Activated T-helper 1 cell treated with anti-CD3 and anti-CD28 coated beads, Interleukin-12 subunit alpha, Interleukin-12 subunit beta, Interleukin-2, Interleukin-4 antibody, amounts not matched to agents 30 ng/mL and 10 ng/mL and 1 ng/mL, durations not matched to agents 14 hours and 24 hours and 36 hours (primary cell): ENCODE measurements at regions of chr15 and their contacts with region 1.

Region 1: DNA sequence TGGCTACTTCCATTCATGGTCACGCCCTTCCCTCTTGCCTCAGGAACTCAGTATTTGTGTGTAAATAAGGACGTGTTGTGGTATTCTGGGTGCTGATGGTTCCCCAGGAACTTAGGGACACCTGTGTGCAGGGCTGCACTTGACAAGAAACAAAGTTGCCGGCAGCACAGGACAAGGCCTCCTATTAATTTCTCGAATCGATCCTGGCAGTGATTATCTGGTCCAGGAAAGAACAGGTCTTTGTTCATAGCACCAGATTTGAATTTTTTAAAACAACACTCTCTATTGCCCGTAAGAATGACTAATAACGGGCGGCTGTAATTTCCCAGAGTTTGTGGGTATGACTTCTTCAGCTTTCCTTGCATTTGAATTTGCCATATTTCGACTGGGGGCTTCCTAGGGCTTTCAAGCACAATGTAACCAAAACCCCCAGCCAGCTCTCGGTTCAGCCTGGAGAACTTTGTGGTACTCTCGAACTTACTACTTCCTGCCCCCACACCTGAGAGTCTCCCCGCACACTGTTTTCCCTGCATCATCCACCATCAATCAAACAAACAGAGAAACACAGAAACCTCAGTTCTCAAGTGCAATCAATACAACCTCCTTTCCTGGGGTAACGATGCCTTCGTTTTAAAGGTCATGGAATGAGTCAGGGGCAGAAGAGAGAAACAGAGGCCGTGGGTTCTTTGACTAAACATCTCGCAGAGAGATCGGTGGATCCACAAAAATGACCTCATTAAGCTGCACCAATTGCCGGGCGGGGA is 241.7 kb upstream of the ICE2 start:
- DNase-seq: peak; percentile 56
- H3K4me3 Mint-ChIP-seq: peak overlapping the region; percentile 59
- H3K27ac Mint-ChIP-seq: peak overlapping the region; percentile 88
- H3K4me1 Mint-ChIP-seq: peaks cover 80% of the 10 kb centered on the region
- H3K27me3 Mint-ChIP-seq: no peaks in the 10 kb centered on the region

Region 2: GRCh38 chr15:60389261-60390077 is 331.2 kb before region 1 on chr15:
- intact Hi-C with region 1: loop called (anchors 2 kb)
- DNase-seq: peak; percentile 60
- H3K4me3 Mint-ChIP-seq: peak overlapping the region; percentile 34
- H3K27ac Mint-ChIP-seq: peak overlapping the region; percentile 81
- H3K4me1 Mint-ChIP-seq: peaks cover 73% of the 10 kb centered on the region
- H3K27me3 Mint-ChIP-seq: no peaks in the 10 kb centered on the region

Region 3: DNA sequence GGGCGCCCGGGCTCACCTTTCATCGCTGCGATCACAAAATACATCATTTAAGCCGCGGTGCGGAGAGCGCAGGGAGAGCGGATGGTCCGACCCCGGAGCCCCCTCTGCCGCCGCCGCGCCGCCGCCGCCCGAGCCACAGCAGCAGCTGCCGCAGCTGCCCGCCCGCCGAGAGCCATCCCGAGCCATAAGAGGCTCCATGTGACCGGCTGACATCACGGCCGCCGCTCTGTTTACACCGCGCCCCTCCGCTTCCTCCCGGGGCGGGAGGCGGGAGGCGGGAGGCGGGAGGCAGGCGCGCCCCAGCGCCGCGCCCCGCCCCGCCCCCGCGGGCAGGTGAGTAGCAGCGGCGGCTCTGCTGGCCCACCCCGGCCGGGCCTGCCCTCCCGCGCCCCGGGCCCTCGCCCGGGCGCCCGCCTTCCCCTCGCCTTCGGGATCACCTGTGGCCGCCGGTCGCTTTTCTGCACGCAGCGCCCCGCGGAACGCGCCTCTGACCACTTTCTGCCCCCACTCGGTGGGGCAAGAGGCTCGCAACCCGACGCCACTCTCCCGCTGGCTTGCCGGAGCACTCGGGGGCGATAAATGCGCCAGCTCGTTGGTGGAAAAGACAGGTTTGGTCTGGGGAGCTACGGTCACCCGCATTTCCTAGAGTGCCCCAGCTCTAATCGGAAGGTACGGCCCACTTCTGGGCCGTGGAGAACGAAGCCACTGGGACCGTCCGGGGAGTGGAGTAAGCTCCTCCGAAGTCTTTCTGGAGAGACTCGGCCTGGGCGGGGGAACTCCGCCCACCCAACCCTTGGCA is 128.1 kb before region 1 on chr15:
- intact Hi-C with region 1: loop called (anchors 1 kb)
- DNase-seq: peak; percentile 84
- H3K4me3 Mint-ChIP-seq: peak overlapping the region; percentile 83
- H3K27ac Mint-ChIP-seq: peak overlapping the region; percentile 68
- H3K4me1 Mint-ChIP-seq: peaks cover 69% of the 10 kb centered on the region
- H3K27me3 Mint-ChIP-seq: peaks cover 2% of the 10 kb centered on the region

Region 4: DNA sequence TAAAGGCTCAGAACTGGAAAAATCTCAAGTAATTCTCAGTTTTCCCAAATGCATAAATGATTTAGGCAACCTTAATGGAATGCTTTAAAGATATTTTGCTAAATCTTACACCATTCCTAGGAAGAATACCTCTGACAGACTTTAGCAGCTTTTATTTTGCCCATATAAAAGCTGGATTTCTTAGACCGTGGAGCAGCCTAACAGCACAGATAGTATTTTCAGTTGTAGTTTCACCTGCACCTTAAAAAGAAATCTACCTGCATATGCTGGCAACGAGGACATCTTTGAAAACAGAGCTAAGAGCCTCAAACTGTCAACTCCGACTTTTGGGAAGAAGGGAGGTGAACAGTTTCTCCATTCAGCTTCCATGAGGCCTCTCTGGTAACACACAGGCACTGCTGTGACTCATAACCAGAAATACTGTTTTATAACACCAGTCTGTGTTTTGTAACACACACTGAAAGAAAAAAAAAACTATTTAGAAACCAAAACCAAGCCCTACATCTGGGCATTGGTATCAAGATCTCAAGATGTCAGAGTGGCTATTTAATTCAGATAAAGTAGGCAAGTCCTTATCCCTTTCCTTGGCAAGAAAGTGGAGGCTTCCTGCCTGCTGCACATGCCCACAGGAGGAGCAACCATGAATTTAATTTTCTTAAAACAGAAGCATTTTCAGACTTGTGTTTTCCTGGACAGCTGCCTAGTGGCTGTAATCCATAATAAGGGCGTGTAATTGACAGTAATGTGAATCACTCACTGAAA is 60.2 kb before region 1 on chr15:
- intact Hi-C with region 1: loop called (anchors 1 kb)
- DNase-seq: no peak
- H3K4me3 Mint-ChIP-seq: no peak overlapping the region
- H3K27ac Mint-ChIP-seq: no peak overlapping the region
- H3K4me1 Mint-ChIP-seq: peaks cover 55% of the 10 kb centered on the region
- H3K27me3 Mint-ChIP-seq: peaks cover 3% of the 10 kb centered on the region

Region 5: GRCh38 chr15:60704129-60704528 is 16.5 kb before region 1 on chr15:
- intact Hi-C with region 1: loop called (anchors 2 kb)
- DNase-seq: no peak
- H3K4me3 Mint-ChIP-seq: no peak overlapping the region
- H3K27ac Mint-ChIP-seq: peak overlapping the region; percentile 1
- H3K4me1 Mint-ChIP-seq: peaks cover 47% of the 10 kb centered on the region
- H3K27me3 Mint-ChIP-seq: no peaks in the 10 kb centered on the region

Region 6: GRCh38 chr15:60798821-60799220 is 78.1 kb after region 1 on chr15:
- intact Hi-C with region 1: loop called (anchors 1 kb)
- DNase-seq: no peak
- H3K4me3 Mint-ChIP-seq: no peak overlapping the region
- H3K27ac Mint-ChIP-seq: peak overlapping the region; percentile 82
- H3K4me1 Mint-ChIP-seq: peaks cover 76% of the 10 kb centered on the region
- H3K27me3 Mint-ChIP-seq: no peaks in the 10 kb centered on the region

Region 7: DNA sequence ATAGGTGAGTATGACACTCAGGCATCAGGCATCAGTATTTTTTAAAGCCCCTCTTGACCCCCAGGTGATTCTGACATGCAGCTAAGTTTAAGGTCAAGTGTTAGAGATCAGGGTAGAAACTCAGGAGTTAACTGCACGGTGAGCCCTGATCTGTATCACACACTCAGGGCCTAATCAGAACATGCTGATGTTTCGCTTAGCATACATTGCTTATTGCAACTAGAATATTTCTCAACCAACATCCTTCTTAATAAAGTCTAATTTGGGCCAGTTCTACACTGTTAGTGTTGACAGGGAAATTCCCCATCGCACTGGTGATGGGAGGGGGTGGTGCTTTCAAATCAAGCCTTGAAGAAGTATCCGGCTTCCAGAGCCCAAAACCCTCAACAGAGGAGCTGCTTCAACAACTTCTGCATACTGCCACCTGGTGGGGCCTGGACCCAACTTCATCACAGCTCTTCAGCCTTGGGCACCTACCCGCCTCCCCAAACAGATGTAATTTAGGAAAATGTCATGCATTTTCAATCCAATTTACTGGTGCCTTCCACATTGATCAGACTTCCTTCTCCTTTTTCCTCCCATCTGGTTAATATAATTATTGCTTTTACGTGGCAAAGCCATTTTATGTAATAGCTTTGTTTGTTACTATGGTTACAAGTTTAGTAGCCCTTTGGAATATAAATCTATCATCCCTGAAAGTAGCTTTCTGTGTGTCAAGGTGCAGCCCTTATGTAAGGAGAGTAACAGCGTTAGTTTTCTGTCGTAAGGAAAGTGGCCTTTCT is 196.2 kb after region 1 on chr15:
- intact Hi-C with region 1: loop called (anchors 1 kb)
- DNase-seq: peak; percentile 80
- H3K4me3 Mint-ChIP-seq: peak overlapping the region; percentile 17
- H3K27ac Mint-ChIP-seq: peak overlapping the region; percentile 64
- H3K4me1 Mint-ChIP-seq: peaks cover 32% of the 10 kb centered on the region
- H3K27me3 Mint-ChIP-seq: peaks cover 2% of the 10 kb centered on the region